ENCODE measurements at regions of chr14 and their contacts with region 1.

Region 1: DNA sequence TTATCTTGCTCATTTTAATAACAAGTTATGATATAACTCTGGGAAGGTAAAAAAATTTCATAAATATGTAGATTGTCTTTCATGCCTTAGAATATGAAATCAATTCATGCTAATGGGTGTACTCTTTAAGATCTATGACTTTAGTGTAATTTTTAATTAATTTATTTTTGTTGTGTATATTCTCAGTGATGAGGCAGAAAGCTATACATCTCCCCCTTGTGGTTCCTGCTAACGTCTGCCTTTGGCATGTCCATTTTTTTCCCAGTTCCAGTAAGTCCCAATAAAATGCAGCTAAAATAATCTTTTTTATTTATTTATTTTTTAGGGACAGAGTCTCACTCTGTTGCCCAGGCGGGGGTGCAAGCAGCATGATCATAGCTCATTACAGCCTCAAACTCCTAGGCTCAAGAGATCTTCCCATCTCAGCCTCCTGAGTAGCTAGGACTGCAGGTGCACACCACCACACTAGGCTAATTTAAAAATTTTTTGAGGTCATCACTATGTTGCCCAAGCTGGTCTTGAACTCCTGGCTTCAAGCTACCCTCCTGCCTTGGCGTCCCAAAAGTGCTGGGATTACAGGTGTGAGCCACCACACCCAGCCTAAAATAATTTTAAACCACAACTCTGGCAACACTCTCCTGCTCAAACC is 3.3 kb upstream of the CHURC1 start:
- DNase-seq: peak in 2 of 3 donors; percentile 35 to 41
- H3K4me3 ChIP-seq: no peak overlapping the region
- H3K27ac ChIP-seq: no peak overlapping the region
- H3K4me1 ChIP-seq: peaks cover 10 to 26% (median 19%) of the 10 kb centered on the region in 4 experiments
- H3K27me3 ChIP-seq: no peaks in the 10 kb centered on the region

Region 2: DNA sequence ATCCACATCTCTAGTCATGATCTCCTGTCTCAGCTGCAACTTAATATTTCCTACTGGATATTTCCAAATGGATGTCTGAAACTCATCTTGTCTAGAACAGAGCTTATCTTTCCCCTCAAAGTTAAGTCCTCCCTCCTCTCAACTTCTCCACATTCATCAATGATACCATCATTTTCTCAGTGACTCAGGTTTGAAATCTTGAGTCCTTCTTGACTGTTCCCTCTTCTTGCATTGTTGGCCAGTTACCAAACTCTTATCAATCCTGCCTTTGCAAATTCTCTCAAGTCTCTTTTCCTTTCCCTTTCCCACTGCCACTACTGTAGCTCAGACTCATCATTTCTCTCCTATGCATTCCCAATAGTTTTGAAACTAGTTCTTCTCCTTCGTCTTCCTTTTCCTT is 11.0 kb before region 1 on chr14:
- CTCF ChIA-PET with region 1: interaction called, 12 read pairs
- POLR2A ChIA-PET with region 1: no interaction called
- DNase-seq: no peak
- H3K4me3 ChIP-seq: no peak overlapping the region
- H3K27ac ChIP-seq: no peak overlapping the region
- H3K4me1 ChIP-seq: no peaks in the 10 kb centered on the region
- H3K27me3 ChIP-seq: peaks cover 0 to 8% (median 0%) of the 10 kb centered on the region in 5 experiments